Heart right ventricle (tissue), 16 donors: ENCODE measurements at regions of chr6 and their contacts with region 1.

Region 1: DNA sequence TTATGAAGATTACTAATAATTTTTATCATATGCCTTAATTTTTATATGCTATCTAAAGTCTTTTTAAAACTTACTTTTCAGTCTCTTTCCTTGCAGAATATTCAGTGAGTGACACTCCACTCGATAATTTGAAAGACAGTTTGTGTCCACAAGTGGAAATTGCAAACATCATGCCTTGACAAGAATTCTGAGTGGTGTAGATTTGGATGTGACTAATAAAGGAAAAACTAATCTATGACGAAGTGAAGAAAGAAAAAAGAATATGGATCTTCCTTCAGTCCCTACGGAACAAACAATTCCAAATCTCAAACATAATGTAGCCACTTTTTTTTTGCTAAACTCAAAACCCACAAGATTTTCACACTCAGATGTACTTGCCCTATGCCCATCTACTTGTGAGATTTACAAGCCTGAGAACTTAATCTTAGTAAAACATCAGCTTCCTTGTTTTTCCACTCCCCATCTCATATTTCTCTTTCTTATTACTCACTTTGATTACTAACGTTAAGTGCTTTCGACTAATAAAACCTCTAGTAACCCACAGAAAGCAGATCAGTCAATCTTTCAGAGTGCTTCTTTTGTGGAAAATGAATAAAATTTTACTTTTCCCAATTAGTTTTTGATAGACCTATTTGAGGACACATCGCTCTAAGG is 1155.8 kb downstream of the GRIK2 start:
- DNase-seq: no peak
- ATAC-seq: no peak
- H3K4me3 ChIP-seq: no peak overlapping the region
- H3K27ac ChIP-seq: no peak overlapping the region
- H3K4me1 ChIP-seq: no peaks in the 10 kb centered on the region
- H3K27me3 ChIP-seq: no peaks in the 10 kb centered on the region
- CTCF ChIP-seq: no peak

Region 2: GRCh38 chr6:102387326-102388033 is 161.9 kb before region 1 on chr6:
- intact Hi-C with region 1: no loop called
- DNase-seq: no peak
- ATAC-seq: no peak
- H3K4me3 ChIP-seq: no peak overlapping the region
- H3K27ac ChIP-seq: no peak overlapping the region
- H3K4me1 ChIP-seq: no peaks in the 10 kb centered on the region
- H3K27me3 ChIP-seq: no peaks in the 10 kb centered on the region
- CTCF ChIP-seq: no peak

Region 3: DNA sequence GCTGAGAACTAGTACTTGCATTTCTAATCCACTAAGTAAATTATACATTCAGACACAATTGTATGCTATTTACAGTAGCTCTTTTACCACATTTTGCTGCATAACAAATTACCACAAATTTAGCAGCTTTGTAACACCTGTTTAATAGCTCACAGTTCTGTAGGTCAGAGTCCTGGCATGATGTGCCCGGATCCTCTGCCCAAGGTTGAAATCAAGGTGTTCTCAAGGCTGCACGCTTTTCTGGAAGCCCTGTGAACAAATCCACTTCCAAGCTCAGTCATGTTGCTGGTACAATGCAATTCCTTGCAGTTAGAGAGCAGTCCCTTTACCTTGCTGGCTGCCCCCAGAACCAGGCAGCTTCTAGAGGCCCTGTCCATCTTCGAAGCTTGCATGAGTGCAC is 1594.4 kb after region 1 on chr6:
- intact Hi-C with region 1: loop called in 1 of 10 experiments (anchors 5 kb)
- DNase-seq: no peak
- ATAC-seq: no peak
- H3K4me3 ChIP-seq: no peak overlapping the region
- H3K27ac ChIP-seq: no peak overlapping the region
- H3K4me1 ChIP-seq: no peaks in the 10 kb centered on the region
- H3K27me3 ChIP-seq: no peaks in the 10 kb centered on the region
- CTCF ChIP-seq: no peak